Naive thymus-derived CD4-positive, alpha-beta T cell (primary cell): ENCODE measurements at regions of chr3 and their contacts with region 1.

Region 1: DNA sequence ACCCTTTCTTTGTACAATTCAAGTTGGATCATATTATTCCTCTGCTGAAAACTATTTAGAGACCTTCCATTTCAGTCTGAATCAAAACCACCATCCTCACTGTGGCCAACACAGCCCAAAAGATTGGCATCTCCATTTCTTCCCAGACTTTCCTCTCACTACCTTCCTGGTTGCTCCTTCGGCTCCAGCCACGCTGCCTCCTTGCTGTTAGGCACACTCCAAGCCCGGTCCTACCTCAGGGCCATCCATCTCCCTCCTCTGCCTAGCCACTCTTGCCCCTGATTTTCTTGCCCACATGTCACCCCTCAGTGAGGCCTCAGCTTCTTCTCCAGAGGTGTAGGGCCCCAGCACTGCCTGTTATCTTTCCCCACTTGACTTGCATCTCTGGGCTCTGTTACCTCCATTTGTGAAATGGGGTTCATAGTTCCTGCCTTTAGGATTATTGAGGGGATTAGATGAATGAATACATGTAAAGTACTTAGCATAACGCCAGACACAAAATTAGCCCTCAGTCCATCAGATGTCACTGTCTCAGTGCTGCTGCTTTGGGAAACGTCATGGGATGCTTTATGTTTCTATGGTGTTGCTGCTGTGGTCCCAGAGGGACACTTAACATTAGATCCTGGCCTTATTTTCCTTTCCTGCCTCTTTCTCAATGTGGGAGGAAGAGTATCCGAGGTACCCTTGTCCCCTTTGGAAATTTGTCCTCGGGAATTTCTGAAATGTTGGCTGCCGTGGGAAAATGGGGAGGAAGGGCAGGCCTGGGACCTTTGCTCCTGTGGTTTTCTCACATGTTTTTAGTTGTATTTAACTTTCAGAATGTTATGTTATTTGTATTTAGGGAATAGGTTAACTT is 31.3 kb downstream of the SNRK start:
- DNase-seq: no peak
- ATAC-seq: peak; percentile 24
- H3K4me3 ChIP-seq: no peak overlapping the region
- H3K4me3 Mint-ChIP-seq: peak overlapping the region in 9 of 10 donors; percentile 37 to 76 (median 59)
- H3K27ac ChIP-seq: peak overlapping the region; percentile 42
- H3K27ac Mint-ChIP-seq: peak overlapping the region; percentile 7 to 91 (median 80)
- H3K4me1 ChIP-seq: peaks cover 28 to 48% of the 10 kb centered on the region in 2 donors
- H3K4me1 Mint-ChIP-seq: peaks cover 40 to 95% (median 93%) of the 10 kb centered on the region in 7 donors
- H3K27me3 ChIP-seq: no peaks in the 10 kb centered on the region
- H3K27me3 Mint-ChIP-seq: no peaks in the 10 kb centered on the region

Region 2: GRCh38 chr3:42961633-42962032 is 356.1 kb before region 1 on chr3:
- CTCF ChIA-PET with region 1: no interaction called
- POLR2A ChIA-PET with region 1: no interaction called
- intact Hi-C with region 1: no loop called
- DNase-seq: peak in 6 of 9 donors; percentile 11 to 50 (median 42)
- ATAC-seq: peak; percentile 45
- H3K4me3 ChIP-seq: no peak overlapping the region
- H3K4me3 Mint-ChIP-seq: no peak overlapping the region
- H3K27ac ChIP-seq: no peak overlapping the region
- H3K27ac Mint-ChIP-seq: peak overlapping the region in 2 of 9 donors; percentile 2 to 24
- H3K4me1 ChIP-seq: peaks cover 0 to 27% of the 10 kb centered on the region in 2 donors
- H3K4me1 Mint-ChIP-seq: peaks cover 0 to 38% (median 34%) of the 10 kb centered on the region in 7 donors
- H3K27me3 ChIP-seq: no peaks in the 10 kb centered on the region
- H3K27me3 Mint-ChIP-seq: peaks cover 0 to 19% (median 3%) of the 10 kb centered on the region in 5 donors

Region 3: GRCh38 chr3:43210049-43211027 is 107.4 kb before region 1 on chr3:
- CTCF ChIA-PET with region 1: no interaction called
- POLR2A ChIA-PET with region 1: no interaction called
- intact Hi-C with region 1: no loop called
- DNase-seq: no peak
- ATAC-seq: no peak
- H3K4me3 ChIP-seq: no peak overlapping the region
- H3K4me3 Mint-ChIP-seq: no peak overlapping the region
- H3K27ac ChIP-seq: no peak overlapping the region
- H3K27ac Mint-ChIP-seq: peak overlapping the region in 4 of 9 donors; percentile 18 to 88 (median 52)
- H3K4me1 ChIP-seq: no peaks in the 10 kb centered on the region
- H3K4me1 Mint-ChIP-seq: peaks cover 2 to 15% (median 9%) of the 10 kb centered on the region in 7 donors
- H3K27me3 ChIP-seq: no peaks in the 10 kb centered on the region
- H3K27me3 Mint-ChIP-seq: peaks cover 0 to 15% (median 0%) of the 10 kb centered on the region in 5 donors

Region 4: GRCh38 chr3:43302116-43302880 is 15.4 kb before region 1 on chr3:
- CTCF ChIA-PET with region 1: interaction called, 4 read pairs
- POLR2A ChIA-PET with region 1: interaction called, 20 read pairs
- intact Hi-C with region 1: loop called in 1 of 2 experiments (anchors 1 kb)
- DNase-seq: no peak
- ATAC-seq: no peak
- H3K4me3 ChIP-seq: no peak overlapping the region
- H3K4me3 Mint-ChIP-seq: peak overlapping the region; percentile 51 to 86 (median 72)
- H3K27ac ChIP-seq: peak overlapping the region; percentile 89
- H3K27ac Mint-ChIP-seq: peak overlapping the region; percentile 74 to 96 (median 91)
- H3K4me1 ChIP-seq: peaks cover 54 to 71% of the 10 kb centered on the region in 2 donors
- H3K4me1 Mint-ChIP-seq: peaks cover 41 to 94% (median 85%) of the 10 kb centered on the region in 7 donors
- H3K27me3 ChIP-seq: no peaks in the 10 kb centered on the region
- H3K27me3 Mint-ChIP-seq: no peaks in the 10 kb centered on the region

Region 5: DNA sequence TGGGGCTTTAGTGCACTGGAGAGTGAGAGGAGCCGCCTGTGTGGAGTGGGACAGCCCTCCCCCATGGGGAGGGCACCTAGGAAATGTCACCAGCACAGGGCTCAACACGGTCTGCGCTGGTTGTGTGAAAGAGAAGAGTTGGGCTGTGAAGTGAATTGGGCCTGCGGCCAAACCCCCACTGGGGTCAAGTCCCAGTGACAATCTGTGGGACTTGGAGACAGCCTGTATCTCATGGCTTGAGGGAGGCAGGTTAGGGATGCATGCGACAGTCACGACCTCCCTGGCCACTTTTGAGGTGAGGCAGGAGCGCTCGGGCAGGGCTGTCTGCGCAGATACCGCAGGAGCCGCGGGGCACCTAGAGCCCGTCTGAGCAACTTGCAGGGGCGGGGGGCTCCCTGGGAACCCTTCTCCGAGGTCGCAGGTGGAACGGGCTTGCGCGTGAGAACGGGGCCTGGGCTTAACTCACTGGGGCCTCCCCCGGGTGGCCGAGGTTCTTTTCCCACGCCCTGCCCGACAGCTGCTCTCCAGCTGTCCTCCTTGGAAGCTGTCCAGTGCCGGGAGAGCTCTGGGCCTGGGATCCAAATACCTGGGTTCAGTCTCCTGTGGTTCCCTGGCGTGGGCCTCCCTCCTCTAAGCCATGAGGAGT is 46.1 kb after region 1 on chr3:
- CTCF ChIA-PET with region 1: no interaction called
- POLR2A ChIA-PET with region 1: no interaction called
- intact Hi-C with region 1: loop called in 1 of 2 experiments (anchors 1 kb)
- DNase-seq: no peak
- ATAC-seq: no peak
- H3K4me3 ChIP-seq: no peak overlapping the region
- H3K4me3 Mint-ChIP-seq: no peak overlapping the region
- H3K27ac ChIP-seq: no peak overlapping the region
- H3K27ac Mint-ChIP-seq: peak overlapping the region in 6 of 9 donors; percentile 21 to 72 (median 64)
- H3K4me1 ChIP-seq: no peaks in the 10 kb centered on the region
- H3K4me1 Mint-ChIP-seq: peaks cover 0 to 5% (median 0%) of the 10 kb centered on the region in 7 donors
- H3K27me3 ChIP-seq: no peaks in the 10 kb centered on the region
- H3K27me3 Mint-ChIP-seq: no peaks in the 10 kb centered on the region